Stomach (tissue), 19 donors: ENCODE measurements at regions of chr7 and their contacts with region 1.

Region 1: DNA sequence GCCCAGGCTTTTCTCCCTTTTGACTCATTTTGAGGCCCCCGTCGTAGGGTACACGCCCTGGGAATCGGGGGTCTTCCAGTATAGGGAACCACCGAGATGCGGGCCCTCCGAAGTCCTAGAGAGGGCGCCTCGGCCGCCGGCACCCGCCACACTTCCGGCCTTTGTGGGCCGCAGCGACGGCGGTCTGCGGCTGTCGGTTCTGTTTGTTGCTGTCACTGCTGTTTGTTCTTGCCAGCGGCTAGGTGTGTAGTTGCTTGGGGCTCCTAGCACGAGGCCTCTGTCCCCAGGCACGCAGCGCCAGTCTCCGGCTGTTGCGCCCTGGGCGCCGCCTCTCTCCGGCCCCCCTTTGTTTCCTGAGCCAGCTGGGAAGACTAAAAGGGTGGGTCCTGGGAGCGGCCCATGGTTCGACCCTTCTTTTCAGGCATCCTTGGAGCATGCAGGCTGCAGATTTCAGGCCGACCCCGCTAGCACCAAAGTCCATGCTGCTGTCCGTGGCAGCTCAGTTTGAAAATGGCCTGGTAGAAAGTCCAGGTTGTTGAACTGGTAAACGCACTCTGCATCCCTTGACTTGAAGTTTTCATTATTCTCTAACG is 17.8 kb upstream of the ZKSCAN1 start:
- DNase-seq: peak; percentile 79 to 90
- H3K4me3 ChIP-seq: peak overlapping the region; percentile 37 to 50 (median 50)
- H3K27ac ChIP-seq: peak overlapping the region; percentile 75 to 89 (median 84)
- H3K4me1 ChIP-seq: peaks cover 8 to 55% (median 47%) of the 10 kb centered on the region in 4 donors
- H3K27me3 ChIP-seq: no peaks in the 10 kb centered on the region
- CTCF ChIP-seq: peak in 3 of 7 experiments; percentile 17 to 44 (median 40)
- EP300 ChIP-seq: no peak
- POLR2A ChIP-seq: no peak

Region 2: GRCh38 chr7:100049441-100050311 is 52.0 kb after region 1 on chr7 and contains the start of gene ZSCAN21:
- intact Hi-C with region 1: loop called (anchors 10 kb)
- DNase-seq: peak; percentile 85 to 96
- H3K4me3 ChIP-seq: peak within 1 kb of the TSS; percentile 61 to 82 (median 76)
- H3K27ac ChIP-seq: peak within 1 kb of the TSS; percentile 96 to 98 (median 98)
- H3K4me1 ChIP-seq: peaks cover 6 to 35% (median 23%) of the 10 kb centered on the region in 4 donors
- H3K27me3 ChIP-seq: no peaks in the 10 kb centered on the region
- CTCF ChIP-seq: peak in 1 of 7 experiments; percentile 17
- EP300 ChIP-seq: no peak
- POLR2A ChIP-seq: peak in 2 of 4 donors; percentile 61 to 79
- total RNA-seq, gene ZSCAN21: 6.4 to 48.4 (median 14.6) TPM